GM18951 (cell line): ENCODE measurements at regions of chr18 and their contacts with region 1.

Region 1: GRCh38 chr18:59899298-59900221 is at the start of gene PMAIP1:
- POLR2A ChIP-seq: peak; percentile 100

Region 2: DNA sequence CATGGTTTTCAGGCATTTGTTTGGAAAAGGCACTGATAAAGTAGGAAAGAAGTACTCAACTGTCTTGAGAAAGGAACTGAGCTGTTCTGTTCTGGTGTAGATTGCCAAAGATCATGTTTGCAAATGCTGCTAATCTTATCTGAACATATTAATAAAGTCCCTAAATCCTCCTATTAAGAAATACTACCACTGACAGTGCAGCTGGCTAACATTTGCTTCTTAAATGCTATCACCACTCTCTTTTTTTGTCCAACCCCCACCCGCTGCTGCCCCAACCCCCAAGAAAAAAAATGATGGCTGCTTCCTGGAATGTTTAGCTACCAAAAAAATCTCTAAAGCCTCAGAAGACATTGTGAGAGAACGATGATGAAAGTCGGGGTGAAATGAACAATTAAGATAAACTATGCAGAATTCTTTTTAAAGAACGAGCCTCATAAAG is 333.0 kb before region 1 on chr18:
- in situ Hi-C with region 1: no loop called
- POLR2A ChIP-seq: no peak

Region 3: DNA sequence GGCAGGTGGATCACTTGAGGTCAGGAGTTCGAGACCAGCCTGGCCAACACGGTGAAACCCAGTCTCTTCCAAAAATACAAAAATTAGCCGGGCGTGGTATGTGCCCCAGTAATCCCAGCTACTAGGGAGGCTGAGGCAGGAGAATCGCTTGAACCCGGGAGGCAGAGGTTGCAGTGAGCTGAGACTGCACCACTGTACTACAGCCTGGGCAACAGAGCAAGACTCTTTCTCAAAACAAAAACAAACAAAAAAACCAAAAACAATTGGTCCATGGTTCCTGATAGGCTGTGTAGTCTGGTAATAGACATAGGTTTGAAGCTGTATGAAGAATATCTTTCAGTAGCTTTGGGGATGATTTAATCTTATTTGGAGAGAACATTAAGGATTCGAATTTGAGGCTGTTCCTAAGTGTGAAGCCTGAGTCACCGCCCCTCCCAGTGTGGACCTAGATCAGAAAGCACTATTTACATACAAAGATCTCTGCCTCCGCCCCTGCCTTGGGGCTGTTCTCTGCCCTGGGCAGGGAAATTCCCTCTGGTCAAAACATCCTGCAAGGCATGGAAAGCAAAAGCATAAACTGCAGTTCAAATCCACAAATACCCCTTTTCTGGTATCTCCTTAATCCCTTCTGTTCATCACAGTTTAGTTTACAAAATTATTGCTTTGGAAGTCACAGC is 52.6 kb before region 1 on chr18:
- in situ Hi-C with region 1: loop called (anchors 10 kb)
- POLR2A ChIP-seq: no peak